ENCODE measurements at regions of chr13 and their contacts with region 1.

Region 1: GRCh38 chr13:36346222-36347083 is at the start of gene SPART:
- DNase-seq: peak; percentile 61 to 90 (median 83)
- ATAC-seq: peak; percentile 90
- H3K4me3 ChIP-seq: peak within 1 kb of the TSS; percentile 74 to 94
- H3K4me3 Mint-ChIP-seq: peak within 1 kb of the TSS; percentile 93
- H3K27ac ChIP-seq: peak within 1 kb of the TSS; percentile 92 to 96
- H3K27ac Mint-ChIP-seq: peak within 1 kb of the TSS; percentile 96
- H3K4me1 ChIP-seq: peaks cover 16% of the 10 kb centered on the region
- H3K4me1 Mint-ChIP-seq: peaks cover 38% of the 10 kb centered on the region
- H3K27me3 ChIP-seq: no peaks in the 10 kb centered on the region
- H3K27me3 Mint-ChIP-seq: peaks cover 4% of the 10 kb centered on the region
- CTCF ChIP-seq: peak; percentile 93
- total RNA-seq, gene SPART: 16.2 to 20.1 TPM

Region 2: DNA sequence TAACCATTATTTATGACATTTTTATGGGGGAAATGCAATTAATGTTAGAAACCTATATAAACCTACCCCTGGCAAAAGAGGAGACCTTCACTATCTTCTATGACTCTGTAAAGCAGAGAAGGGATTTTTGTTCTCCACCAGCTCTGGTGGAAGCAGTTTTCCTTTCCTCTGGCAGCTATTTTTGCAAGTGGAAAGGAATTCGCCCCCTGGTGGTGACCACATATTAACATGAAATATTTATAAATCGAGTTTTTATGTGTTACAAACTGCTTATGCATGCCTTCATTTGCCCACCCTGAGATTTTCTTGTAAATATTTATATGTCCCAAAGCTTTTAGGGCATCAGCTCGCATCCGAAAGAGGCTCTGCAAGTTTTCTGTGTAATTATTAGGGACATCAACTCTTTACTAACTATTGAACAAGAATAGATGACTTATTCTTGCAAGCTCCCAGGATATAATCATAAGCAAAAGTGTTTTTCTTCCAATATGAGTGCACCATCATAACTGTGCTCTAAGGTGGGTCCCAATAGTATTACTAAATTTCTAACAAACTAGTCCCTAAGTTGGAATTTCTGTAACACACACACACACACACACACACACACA is 389.8 kb after region 1 on chr13:
- CTCF ChIA-PET with region 1: interaction called, 22 read pairs
- POLR2A ChIA-PET with region 1: no interaction called
- intact Hi-C with region 1: loop called in 1 of 2 experiments (anchors 1 kb)
- DNase-seq: peak in 5 of 9 experiments; percentile 3 to 50 (median 30)
- ATAC-seq: no peak
- H3K4me3 ChIP-seq: no peak overlapping the region
- H3K4me3 Mint-ChIP-seq: no peak overlapping the region
- H3K27ac ChIP-seq: no peak overlapping the region
- H3K27ac Mint-ChIP-seq: no peak overlapping the region
- H3K4me1 ChIP-seq: no peaks in the 10 kb centered on the region
- H3K4me1 Mint-ChIP-seq: no peaks in the 10 kb centered on the region
- H3K27me3 ChIP-seq: no peaks in the 10 kb centered on the region
- H3K27me3 Mint-ChIP-seq: peaks cover 2% of the 10 kb centered on the region
- CTCF ChIP-seq: peak; percentile 64

Region 3: DNA sequence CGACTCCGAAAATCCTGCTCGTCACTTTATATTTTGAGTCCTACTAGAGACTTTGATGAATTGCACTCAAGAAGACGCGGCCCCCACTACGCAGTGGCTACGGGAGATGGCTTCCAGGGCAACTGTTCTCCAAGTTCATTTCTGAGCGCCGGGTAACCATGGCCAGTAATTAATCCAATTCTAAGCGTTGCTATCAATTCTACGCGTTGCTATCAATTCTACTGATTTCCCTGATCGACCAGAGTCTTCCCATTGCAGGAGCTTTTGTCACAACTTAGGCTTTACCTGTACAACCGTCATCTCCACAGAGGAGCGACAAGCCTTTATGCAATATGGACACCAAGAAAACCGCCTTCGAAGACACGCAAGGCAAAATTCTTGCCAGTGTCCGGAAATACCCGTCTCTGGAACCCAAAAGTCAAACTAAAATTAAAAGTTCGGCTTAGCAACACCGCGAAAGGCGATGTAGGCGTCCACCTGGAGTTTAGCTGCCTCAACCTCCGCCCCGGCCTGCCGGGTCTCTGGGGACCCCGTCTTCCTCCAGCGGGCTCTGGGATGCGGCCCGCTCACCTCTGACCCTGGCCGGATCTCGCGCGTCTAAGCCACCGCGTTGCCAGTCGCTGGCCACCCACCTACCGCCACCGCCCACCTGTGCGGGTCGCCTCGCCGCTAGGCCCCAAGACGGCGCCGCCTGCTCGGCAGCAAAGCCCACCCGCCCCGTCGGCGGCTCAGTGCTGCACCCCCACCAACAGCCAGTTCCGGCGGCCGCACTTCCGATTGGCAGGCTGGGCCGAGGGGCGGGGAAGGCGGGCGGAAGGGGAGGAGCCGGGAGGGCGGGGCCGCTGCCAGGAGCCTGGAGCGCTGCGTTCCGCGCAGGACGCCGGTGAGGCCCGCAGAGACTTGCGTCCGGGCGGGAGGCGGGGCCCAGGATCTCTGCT is 712.7 kb after region 1 on chr13 and contains the start of gene SUPT20H:
- CTCF ChIA-PET with region 1: no interaction called
- POLR2A ChIA-PET with region 1: no interaction called
- intact Hi-C with region 1: loop called (anchors 5 kb)
- DNase-seq: peak; percentile 90 to 97 (median 95)
- ATAC-seq: peak; percentile 91
- H3K4me3 ChIP-seq: peak within 1 kb of the TSS; percentile 93 to 96
- H3K4me3 Mint-ChIP-seq: peak within 1 kb of the TSS; percentile 90
- H3K27ac ChIP-seq: peak within 1 kb of the TSS; percentile 95 to 96
- H3K27ac Mint-ChIP-seq: peak within 1 kb of the TSS; percentile 99
- H3K4me1 ChIP-seq: peaks cover 24% of the 10 kb centered on the region
- H3K4me1 Mint-ChIP-seq: peaks cover 50% of the 10 kb centered on the region
- H3K27me3 ChIP-seq: no peaks in the 10 kb centered on the region
- H3K27me3 Mint-ChIP-seq: no peaks in the 10 kb centered on the region
- CTCF ChIP-seq: no peak
- total RNA-seq, gene SUPT20H: 53.0 to 55.0 TPM

Measured in CD8-positive, alpha-beta T cell (primary cell).